Right cardiac atrium (tissue), 5 donors: ENCODE measurements at regions of chr1 and their contacts with region 1.

Region 1: DNA sequence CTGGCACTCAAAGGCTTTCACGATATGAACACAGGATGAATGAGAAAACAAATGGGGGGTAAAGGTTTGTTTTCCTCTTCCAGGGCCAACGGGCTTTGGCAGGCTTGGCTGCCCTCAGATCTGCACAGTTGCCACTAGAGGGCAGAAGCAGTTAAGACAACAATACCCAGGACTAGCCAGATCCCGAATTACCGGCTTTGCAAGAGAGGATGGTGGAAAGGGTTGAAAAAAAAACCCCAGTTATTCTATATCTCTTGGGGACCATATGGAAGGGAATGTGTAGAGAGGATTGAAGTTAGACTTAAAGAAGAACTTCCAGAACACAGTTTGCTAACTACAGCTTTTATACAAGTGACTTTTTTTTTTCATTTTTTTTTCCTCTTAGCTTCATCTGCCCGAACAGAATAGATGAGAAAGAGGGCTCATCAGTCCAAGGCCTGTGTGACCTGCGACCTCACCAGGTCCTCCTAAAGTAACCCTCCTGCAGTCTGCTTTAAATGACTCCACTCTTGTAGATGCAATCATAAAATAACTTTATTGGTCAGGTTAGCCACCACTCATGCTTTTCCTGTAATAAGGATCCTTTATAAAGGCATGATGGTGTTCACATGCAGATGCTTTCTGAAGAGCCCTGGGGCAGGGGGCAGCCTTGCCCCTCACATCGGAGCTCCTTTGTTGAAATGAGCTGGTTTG is 10.7 kb downstream of the FMOD start:
- DNase-seq: peak; percentile 62 to 87 (median 80)
- ATAC-seq: peak; percentile 79 to 82
- H3K4me3 ChIP-seq: no peak overlapping the region
- H3K27ac ChIP-seq: no peak overlapping the region
- H3K4me1 ChIP-seq: no peaks in the 10 kb centered on the region
- H3K27me3 ChIP-seq: no peaks in the 10 kb centered on the region

Region 2: GRCh38 chr1:203127666-203128430 is 212.4 kb before region 1 on chr1 and contains the start of gene ADORA1:
- intact Hi-C with region 1: no loop called
- DNase-seq: peak; percentile 68 to 90 (median 86)
- ATAC-seq: peak; percentile 86 to 87
- H3K4me3 ChIP-seq: peak within 1 kb of the TSS; percentile 42
- H3K27ac ChIP-seq: peak within 1 kb of the TSS; percentile 88
- H3K4me1 ChIP-seq: peaks cover 4% of the 10 kb centered on the region
- H3K27me3 ChIP-seq: no peaks in the 10 kb centered on the region
- total RNA-seq, gene ADORA1: 14.8 to 26.3 (median 22.5) TPM

Region 3: GRCh38 chr1:203440771-203441170 is 100.5 kb after region 1 on chr1:
- intact Hi-C with region 1: loop called in 3 of 4 experiments (anchors 1 to 5 kb)
- DNase-seq: peak; percentile 79 to 94 (median 92)
- ATAC-seq: peak; percentile 93 to 95
- H3K4me3 ChIP-seq: no peak overlapping the region
- H3K27ac ChIP-seq: no peak overlapping the region
- H3K4me1 ChIP-seq: no peaks in the 10 kb centered on the region
- H3K27me3 ChIP-seq: no peaks in the 10 kb centered on the region

Region 4: DNA sequence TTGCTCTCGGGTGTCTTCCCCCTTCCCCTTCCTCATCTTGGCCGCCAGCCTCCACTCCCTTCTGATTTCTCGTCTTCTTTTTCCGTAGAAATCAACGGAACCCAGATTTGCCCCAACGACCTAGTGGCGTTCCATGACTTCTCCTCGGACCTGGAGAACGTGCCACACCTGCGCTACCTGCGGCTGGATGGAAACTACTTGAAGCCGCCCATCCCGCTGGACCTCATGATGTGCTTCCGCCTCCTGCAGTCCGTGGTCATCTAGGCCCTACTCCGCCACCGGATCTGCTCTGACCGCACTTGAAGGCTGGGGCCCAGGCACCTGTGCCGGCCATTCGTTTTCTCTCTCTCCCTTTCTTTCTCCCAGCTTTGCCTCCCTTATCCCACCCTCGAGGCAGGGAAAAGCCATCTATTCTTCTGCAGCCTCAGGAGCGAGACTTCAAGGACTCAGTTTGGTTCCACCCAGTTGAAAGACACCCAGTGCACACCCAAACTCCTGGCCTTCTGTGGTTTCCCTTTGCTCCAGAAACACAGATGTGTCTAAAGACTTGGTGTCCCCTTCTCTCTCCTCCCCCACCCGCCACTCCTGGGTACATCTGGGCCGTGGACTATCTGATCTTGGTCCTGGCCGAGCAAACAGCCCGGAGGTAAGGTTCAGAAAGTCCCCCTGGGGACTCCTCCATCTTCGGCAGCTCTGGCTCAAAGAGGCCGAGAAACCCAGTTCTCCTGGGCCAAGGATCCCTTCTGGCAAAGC is 146.5 kb after region 1 on chr1:
- intact Hi-C with region 1: loop called in 3 of 4 experiments (anchors 2 to 5 kb)
- DNase-seq: peak in 2 of 3 donors; percentile 57 to 70
- ATAC-seq: no peak
- H3K4me3 ChIP-seq: no peak overlapping the region
- H3K27ac ChIP-seq: peak overlapping the region; percentile 66
- H3K4me1 ChIP-seq: no peaks in the 10 kb centered on the region
- H3K27me3 ChIP-seq: no peaks in the 10 kb centered on the region